Right lobe of liver (tissue), 6 donors: ENCODE measurements at regions of chr16 and their contacts with region 1.

Region 1: GRCh38 chr16:57576429-57576870 is 34.0 kb downstream of the ADGRG5 start:
- DNase-seq: peak; percentile 72 to 74 (median 73)
- ATAC-seq: peak; percentile 82 to 93 (median 90)
- H3K4me3 ChIP-seq: no peak overlapping the region
- H3K27ac ChIP-seq: no peak overlapping the region
- H3K4me1 ChIP-seq: no peaks in the 10 kb centered on the region
- H3K27me3 ChIP-seq: no peaks in the 10 kb centered on the region
- CTCF ChIP-seq: peak; percentile 87 to 91 (median 89)
- POLR2A ChIP-seq: no peak

Region 2: GRCh38 chr16:57519796-57520360 is 56.6 kb before region 1 on chr16:
- intact Hi-C with region 1: no loop called
- DNase-seq: peak; percentile 82 to 84 (median 83)
- ATAC-seq: peak; percentile 84 to 92 (median 92)
- H3K4me3 ChIP-seq: no peak overlapping the region
- H3K27ac ChIP-seq: no peak overlapping the region
- H3K4me1 ChIP-seq: peaks cover 0 to 8% (median 0%) of the 10 kb centered on the region in 4 donors
- H3K27me3 ChIP-seq: no peaks in the 10 kb centered on the region
- CTCF ChIP-seq: peak; percentile 94 to 99 (median 98)
- POLR2A ChIP-seq: no peak

Region 3: DNA sequence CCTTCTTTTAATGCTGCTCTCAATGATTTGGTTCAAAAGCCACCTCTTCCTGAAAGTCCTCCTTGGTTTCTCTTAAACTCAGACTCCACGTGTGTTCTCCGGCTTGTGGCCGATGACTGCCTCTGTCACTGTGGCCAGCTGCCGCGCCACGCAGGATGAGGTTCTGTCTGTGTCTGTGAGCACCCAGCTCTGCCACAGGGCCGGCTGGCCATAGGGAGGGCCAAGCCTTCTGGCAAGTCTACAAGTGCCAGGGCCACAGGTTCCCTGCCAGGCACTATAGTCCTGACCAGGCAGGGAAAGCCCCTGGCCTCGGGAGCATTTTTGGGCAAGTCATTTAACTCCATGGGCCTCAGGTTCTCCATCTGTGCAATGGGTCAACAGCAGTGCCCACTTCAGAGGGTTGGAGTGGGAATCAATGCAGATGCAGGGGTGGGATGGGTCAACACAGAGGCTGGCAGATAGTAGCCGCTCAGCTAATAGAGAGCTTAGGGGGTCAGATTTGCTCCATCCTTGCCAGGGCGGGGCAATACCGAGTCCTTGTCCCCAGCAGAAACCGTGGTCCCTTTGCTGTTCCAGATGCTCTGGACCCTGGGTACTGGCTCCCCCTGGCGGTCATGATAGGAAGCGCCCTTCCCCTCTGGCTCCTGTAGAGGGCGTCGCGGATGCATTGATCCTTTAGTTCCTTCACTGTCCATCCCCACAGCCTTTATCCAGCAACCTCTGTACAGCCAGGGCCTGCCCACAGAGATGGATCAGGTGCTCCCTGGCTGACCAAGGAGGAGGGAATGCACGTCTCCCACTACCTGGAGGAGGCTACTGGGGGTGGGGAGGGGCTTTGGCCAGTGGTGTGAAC is 72.4 kb after region 1 on chr16:
- intact Hi-C with region 1: loop called in 1 of 2 experiments (anchors 5 kb)
- DNase-seq: peak; percentile 75 to 84 (median 83)
- ATAC-seq: peak; percentile 87 to 96 (median 92)
- H3K4me3 ChIP-seq: no peak overlapping the region
- H3K27ac ChIP-seq: peak overlapping the region in 1 of 3 donors; percentile 5
- H3K4me1 ChIP-seq: no peaks in the 10 kb centered on the region
- H3K27me3 ChIP-seq: no peaks in the 10 kb centered on the region
- CTCF ChIP-seq: peak; percentile 100
- POLR2A ChIP-seq: no peak

Region 4: GRCh38 chr16:57711346-57712026 is 135.0 kb after region 1 on chr16:
- intact Hi-C with region 1: loop called in 1 of 2 experiments (anchors 10 kb)
- DNase-seq: no peak
- ATAC-seq: no peak
- H3K4me3 ChIP-seq: no peak overlapping the region
- H3K27ac ChIP-seq: no peak overlapping the region
- H3K4me1 ChIP-seq: no peaks in the 10 kb centered on the region
- H3K27me3 ChIP-seq: no peaks in the 10 kb centered on the region
- CTCF ChIP-seq: no peak
- POLR2A ChIP-seq: no peak

Region 5: DNA sequence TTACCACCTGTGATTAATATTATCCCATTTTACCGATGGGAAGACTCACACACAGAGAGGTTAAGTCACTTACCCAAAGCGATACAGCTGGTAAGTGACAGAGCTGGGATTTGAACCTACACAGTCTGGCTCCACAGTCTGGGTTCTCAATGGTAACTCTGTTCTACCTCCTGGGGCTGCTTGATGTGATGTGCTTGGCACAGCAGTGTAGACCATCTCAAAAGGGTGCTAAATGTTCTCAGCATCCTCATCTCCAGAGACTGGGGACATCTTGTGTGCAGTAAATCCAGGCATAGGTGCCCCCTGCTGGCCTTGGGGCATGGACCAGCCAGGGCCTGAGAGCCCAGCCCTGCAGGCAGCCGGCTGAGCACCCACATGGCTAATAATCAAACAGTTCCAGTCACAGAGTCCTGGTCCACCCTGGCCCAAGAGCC is 143.7 kb after region 1 on chr16:
- intact Hi-C with region 1: loop called (anchors 5 to 10 kb)
- DNase-seq: peak; percentile 84 to 86 (median 85)
- ATAC-seq: peak; percentile 98 to 99 (median 98)
- H3K4me3 ChIP-seq: no peak overlapping the region
- H3K27ac ChIP-seq: no peak overlapping the region
- H3K4me1 ChIP-seq: no peaks in the 10 kb centered on the region
- H3K27me3 ChIP-seq: no peaks in the 10 kb centered on the region
- CTCF ChIP-seq: peak; percentile 79 to 91 (median 87)
- POLR2A ChIP-seq: no peak